Activated CD4-positive, alpha-beta memory T cell treated with anti-CD3 and anti-CD28 coated beads for 36 hours (primary cell): ENCODE measurements at regions of chrX and their contacts with region 1.

Region 1: DNA sequence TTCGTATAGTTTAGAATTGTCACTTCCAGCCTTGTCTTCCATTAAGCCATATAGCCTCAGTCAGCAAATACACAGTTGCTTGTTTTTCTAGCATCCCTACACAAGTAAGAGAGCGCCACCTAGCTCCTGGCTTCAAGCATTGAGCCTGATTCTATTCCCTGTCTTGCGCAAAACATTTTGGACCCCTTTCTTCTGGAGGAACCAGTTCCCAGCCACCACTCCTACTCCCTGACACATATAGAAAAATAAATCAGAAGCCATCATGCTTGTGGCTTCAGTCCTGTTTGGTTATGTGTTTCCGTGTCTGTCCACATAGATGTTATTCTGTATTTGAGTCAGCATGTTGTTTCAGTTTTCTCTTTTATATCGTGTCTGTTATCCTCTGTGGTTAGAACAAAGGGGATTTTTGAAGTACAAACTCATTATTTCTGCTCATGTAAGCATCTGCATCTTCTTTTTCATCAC is 59.9 kb downstream of the GK start:
- DNase-seq: peak; percentile 71
- H3K4me3 Mint-ChIP-seq: no peak overlapping the region
- H3K27ac Mint-ChIP-seq: peak overlapping the region; percentile 71
- H3K4me1 Mint-ChIP-seq: peaks cover 29% of the 10 kb centered on the region
- H3K27me3 Mint-ChIP-seq: no peaks in the 10 kb centered on the region

Region 2: GRCh38 chrX:30618156-30618765 is 94.8 kb before region 1 on chrX:
- CTCF ChIA-PET with region 1: no interaction called
- POLR2A ChIA-PET with region 1: no interaction called
- intact Hi-C with region 1: loop called (anchors 1 kb)
- DNase-seq: no peak
- H3K4me3 Mint-ChIP-seq: no peak overlapping the region
- H3K27ac Mint-ChIP-seq: no peak overlapping the region
- H3K4me1 Mint-ChIP-seq: peaks cover 11% of the 10 kb centered on the region
- H3K27me3 Mint-ChIP-seq: no peaks in the 10 kb centered on the region

Region 3: DNA sequence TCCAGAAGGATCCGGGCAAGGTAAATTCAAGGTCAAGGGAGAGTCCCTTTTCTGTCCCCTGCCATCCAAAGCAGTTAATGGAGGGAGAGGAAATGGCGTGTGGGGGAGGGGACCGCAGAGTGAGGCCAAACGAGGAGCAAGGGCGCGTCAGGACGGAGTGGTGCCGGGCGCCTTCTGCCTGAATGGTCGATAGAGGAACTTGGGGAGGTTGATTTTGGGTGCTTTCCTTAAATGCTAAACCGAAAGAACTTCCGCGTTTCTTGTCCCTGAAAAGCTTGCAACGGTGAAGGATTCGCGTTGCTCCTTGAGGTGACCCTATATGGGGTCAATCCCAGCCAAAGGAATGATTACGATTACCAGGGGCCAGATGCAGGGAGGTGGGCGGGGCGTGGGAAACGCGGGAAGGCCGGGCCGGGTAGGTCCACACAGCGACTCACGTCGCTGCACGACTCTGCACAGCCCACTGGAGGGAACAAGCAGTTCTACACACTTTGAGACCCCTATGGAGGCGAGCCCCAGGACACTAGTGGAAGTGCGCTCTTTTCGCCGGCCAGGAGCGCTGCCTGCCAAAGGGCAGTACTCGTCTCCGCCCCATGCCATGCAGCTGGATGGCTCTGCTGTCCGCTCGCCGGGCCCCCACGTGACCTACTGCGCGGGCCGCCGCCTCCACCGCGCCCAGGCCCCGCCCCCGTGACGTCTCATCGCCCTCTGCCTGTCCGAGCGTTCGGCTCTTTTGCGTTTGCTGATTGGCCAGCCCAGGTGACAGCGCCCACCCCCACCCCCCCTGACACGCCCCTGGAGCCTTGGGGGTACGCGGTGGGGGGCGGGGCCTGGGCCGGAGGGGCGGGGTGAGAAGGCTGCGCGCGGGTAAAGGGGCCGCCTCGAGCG is 60.3 kb before region 1 on chrX:
- CTCF ChIA-PET with region 1: no interaction called
- POLR2A ChIA-PET with region 1: no interaction called
- intact Hi-C with region 1: loop called (anchors 2 kb)
- DNase-seq: peak; percentile 95
- H3K4me3 Mint-ChIP-seq: peak overlapping the region; percentile 88
- H3K27ac Mint-ChIP-seq: peak overlapping the region; percentile 92
- H3K4me1 Mint-ChIP-seq: peaks cover 43% of the 10 kb centered on the region
- H3K27me3 Mint-ChIP-seq: no peaks in the 10 kb centered on the region

Region 4: DNA sequence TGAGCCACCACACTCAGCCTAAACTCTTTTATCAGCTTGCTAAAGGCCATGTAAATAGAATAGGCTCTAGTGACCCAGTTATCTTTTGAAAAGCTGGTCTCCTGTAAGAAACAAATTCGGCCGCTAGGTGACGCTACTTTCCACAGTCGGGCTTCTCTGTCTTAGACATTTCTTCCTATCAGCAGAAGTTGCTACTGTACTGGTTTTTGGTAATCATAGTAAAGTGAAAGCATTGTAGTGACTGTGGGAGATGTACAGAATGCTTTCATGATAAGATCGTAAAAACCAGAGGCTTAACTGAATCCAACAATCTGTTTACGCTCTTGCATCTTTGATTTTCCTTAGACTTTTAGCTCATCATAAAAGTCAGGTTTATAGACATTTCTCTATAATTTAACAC is 22.7 kb after region 1 on chrX:
- CTCF ChIA-PET with region 1: interaction called, 13 read pairs
- POLR2A ChIA-PET with region 1: no interaction called
- intact Hi-C with region 1: loop called (anchors 1 kb)
- DNase-seq: peak; percentile 82
- H3K4me3 Mint-ChIP-seq: no peak overlapping the region
- H3K27ac Mint-ChIP-seq: no peak overlapping the region
- H3K4me1 Mint-ChIP-seq: peaks cover 10% of the 10 kb centered on the region
- H3K27me3 Mint-ChIP-seq: no peaks in the 10 kb centered on the region

Region 5: DNA sequence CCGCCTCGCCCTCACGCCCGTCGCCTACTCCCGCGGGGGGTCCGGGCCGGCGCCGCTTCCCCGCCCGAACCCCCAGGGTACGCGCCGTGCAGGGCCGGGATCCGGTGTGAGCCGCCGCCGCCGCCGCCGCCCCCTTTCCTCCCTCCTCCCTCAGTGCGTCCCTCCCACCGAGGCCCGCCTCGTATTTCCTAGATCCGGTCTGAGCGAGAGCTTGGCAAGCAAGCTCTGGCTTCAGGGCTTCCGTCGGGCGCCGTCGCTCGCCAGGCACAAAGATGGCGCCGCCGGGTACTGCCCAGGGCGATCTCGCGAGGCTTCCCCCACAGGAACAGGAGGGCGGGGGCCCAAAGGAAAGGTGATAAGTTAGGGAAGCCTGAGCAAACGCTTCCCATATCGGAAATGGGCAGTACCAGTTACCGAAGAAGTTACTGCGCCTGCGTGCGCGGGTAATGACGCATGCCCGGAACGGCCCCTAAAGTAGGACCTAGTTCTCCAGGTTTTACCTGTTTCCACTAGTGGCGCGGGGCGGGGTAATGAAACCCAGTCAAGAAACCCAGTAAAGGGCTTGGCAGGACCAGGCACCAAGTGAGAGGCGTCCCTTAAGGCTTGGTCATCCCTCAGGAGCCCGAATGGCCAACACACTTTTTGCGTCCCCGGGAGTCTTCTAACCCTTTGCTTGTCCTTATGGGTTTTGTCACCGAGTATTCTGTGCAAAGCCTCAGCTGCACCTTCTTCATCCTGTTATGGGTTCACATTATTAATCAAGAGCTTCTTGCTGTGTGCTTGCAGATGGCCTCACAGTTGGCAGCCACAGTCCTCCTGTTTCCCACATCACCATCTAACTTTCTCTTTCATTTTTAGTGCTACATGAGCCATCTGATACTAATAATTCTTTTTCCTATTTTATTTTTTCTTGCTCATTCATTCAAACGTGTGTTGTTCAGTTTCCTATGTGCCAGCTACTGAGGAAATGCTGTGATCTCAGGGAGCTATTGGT is 176.4 kb after region 1 on chrX and contains the start of gene TAB3:
- CTCF ChIA-PET with region 1: no interaction called
- POLR2A ChIA-PET with region 1: no interaction called
- intact Hi-C with region 1: loop called (anchors 1 kb)
- DNase-seq: peak; percentile 95
- H3K4me3 Mint-ChIP-seq: peak within 1 kb of the TSS; percentile 82
- H3K27ac Mint-ChIP-seq: peak within 1 kb of the TSS; percentile 90
- H3K4me1 Mint-ChIP-seq: peaks cover 35% of the 10 kb centered on the region
- H3K27me3 Mint-ChIP-seq: no peaks in the 10 kb centered on the region
- total RNA-seq, gene TAB3: 19.6 to 24.2 TPM